ENCODE measurements at regions of chr5 and their contacts with region 1.

Region 1: DNA sequence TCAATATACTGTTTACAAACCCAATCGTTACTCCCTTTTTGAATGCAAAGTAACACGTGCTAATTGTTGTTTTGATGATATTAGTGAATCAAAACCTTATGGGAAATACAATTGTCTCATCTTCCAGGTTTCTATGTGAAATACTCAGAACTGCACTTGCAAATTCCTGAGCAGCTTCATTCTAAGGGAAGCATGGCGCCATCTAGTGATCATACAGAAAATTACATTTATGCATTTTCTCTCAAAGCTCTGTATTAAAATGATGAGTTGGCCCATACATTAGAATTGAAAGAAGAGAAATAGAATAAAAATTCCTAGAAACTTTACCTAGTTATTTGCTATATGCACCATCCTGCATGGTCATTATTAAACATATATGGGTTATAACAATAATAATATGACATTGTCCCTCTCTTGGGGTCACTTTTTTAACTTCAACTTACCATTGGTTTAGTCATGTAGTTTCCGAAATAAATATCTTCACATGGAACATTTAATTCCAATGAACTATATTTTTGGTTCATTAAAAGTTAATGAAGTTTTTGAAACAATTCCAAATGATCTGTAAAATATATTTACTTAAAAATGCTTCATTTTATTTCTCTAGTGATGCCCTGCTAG is 220.0 kb downstream of the PDE4D start:
- ATAC-seq: peak in 5 of 8 experiments; percentile 18 to 52 (median 41)
- H3K4me3 ChIP-seq: no peak overlapping the region
- H3K27ac ChIP-seq: no peak overlapping the region
- H3K4me1 ChIP-seq: no peaks in the 10 kb centered on the region

Region 2: GRCh38 chr5:59188419-59189225 is 484.9 kb before region 1 on chr5:
- in situ Hi-C with region 1: loop called in 4 of 9 experiments (anchors 25 kb)
- ATAC-seq: peak; percentile 53 to 81 (median 68)
- H3K4me3 ChIP-seq: peak overlapping the region in 4 of 5 donors; percentile 9 to 31 (median 21)
- H3K27ac ChIP-seq: no peak overlapping the region
- H3K4me1 ChIP-seq: peaks cover 0 to 14% of the 10 kb centered on the region in 2 donors

Region 3: GRCh38 chr5:59218424-59219045 is 455.0 kb before region 1 on chr5:
- in situ Hi-C with region 1: loop called in 1 of 9 experiments (anchors 25 kb)
- ATAC-seq: no peak
- H3K4me3 ChIP-seq: no peak overlapping the region
- H3K27ac ChIP-seq: no peak overlapping the region
- H3K4me1 ChIP-seq: no peaks in the 10 kb centered on the region

Region 4: GRCh38 chr5:59380350-59380951 is 293.1 kb before region 1 on chr5:
- in situ Hi-C with region 1: loop called in 6 of 9 experiments (anchors 25 kb)
- ATAC-seq: peak; percentile 39 to 96 (median 56)
- H3K4me3 ChIP-seq: no peak overlapping the region
- H3K27ac ChIP-seq: no peak overlapping the region
- H3K4me1 ChIP-seq: peaks cover 0 to 2% of the 10 kb centered on the region in 2 donors

Region 5: DNA sequence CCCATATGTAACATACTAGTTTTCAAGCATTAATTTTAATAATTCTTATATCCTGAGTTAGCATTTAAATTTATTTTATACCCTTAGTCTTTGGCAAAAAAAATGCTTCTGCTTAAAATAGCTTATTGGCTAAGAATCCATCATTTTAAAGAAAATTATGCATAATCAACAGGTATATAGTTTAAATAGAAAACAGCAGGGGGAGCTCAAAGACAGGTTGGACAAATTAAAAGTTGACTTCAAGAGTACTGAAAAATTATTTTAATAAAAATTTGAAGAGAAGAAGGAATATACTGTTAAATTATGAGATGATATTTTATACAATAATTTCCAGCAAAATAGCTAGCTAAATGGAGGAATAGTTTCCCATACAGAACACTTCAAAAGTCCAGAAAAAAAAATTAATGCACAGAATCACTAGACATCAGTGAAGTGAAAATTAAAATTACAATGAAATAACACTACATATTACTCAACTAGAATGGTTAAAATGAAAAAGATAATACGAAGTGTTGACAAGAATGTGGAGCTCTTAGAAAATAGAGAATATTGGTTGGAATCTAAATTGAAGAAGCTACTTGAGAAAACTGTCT is 167.2 kb before region 1 on chr5:
- in situ Hi-C with region 1: loop called in 4 of 9 experiments (anchors 25 kb)
- ATAC-seq: no peak
- H3K4me3 ChIP-seq: no peak overlapping the region
- H3K27ac ChIP-seq: no peak overlapping the region
- H3K4me1 ChIP-seq: peaks cover 3% of the 10 kb centered on the region in 2 donors

Region 6: GRCh38 chr5:60722416-60722815 is 1048.9 kb after region 1 on chr5:
- in situ Hi-C with region 1: no loop called
- ATAC-seq: peak in 2 of 8 experiments; percentile 45 to 77
- H3K4me3 ChIP-seq: no peak overlapping the region
- H3K27ac ChIP-seq: no peak overlapping the region
- H3K4me1 ChIP-seq: no peaks in the 10 kb centered on the region

Measured in motor neuron (in vitro differentiated cells).